ENCODE measurements at regions of chr12 and their contacts with region 1.

Region 1: GRCh38 chr12:114704096-114704495 is 20.1 kb upstream of the TBX3 start:
- DNase-seq: no peak
- H3K4me3 ChIP-seq: no peak overlapping the region
- H3K27ac ChIP-seq: no peak overlapping the region
- H3K4me1 ChIP-seq: no peaks in the 10 kb centered on the region
- H3K27me3 ChIP-seq: no peaks in the 10 kb centered on the region
- CTCF ChIP-seq: no peak

Region 2: DNA sequence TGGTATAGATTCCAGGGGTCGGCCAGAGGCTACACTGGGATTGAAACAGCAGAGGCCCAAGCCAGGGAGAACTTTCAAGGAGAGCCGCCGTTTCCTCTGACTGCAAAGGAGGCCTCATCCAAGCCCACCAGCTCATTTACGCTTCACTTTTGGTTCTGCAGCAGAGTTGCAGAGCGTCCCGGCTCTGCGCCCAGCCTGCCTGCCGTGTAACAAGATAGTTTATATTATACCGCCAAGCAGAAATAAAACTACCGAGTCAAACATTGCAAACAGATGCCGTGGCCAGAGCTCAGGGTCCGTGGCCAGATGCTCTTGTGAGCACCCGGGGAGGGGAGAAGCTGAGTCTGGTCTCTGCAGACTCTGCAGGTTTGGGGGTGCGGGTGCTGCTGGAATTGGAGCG is 40.6 kb after region 1 on chr12:
- CTCF ChIA-PET with region 1: interaction called, 35 read pairs
- dilution Hi-C with region 1: no loop called
- in situ Hi-C with region 1: no loop called
- intact Hi-C with region 1: no loop called
- DNase-seq: no peak
- H3K4me3 ChIP-seq: no peak overlapping the region
- H3K27ac ChIP-seq: no peak overlapping the region
- H3K4me1 ChIP-seq: no peaks in the 10 kb centered on the region
- H3K27me3 ChIP-seq: no peaks in the 10 kb centered on the region
- CTCF ChIP-seq: no peak

Measured in mammary epithelial cell (primary cell).